ENCODE measurements at regions of chr1 and their contacts with region 1.

Region 1: DNA sequence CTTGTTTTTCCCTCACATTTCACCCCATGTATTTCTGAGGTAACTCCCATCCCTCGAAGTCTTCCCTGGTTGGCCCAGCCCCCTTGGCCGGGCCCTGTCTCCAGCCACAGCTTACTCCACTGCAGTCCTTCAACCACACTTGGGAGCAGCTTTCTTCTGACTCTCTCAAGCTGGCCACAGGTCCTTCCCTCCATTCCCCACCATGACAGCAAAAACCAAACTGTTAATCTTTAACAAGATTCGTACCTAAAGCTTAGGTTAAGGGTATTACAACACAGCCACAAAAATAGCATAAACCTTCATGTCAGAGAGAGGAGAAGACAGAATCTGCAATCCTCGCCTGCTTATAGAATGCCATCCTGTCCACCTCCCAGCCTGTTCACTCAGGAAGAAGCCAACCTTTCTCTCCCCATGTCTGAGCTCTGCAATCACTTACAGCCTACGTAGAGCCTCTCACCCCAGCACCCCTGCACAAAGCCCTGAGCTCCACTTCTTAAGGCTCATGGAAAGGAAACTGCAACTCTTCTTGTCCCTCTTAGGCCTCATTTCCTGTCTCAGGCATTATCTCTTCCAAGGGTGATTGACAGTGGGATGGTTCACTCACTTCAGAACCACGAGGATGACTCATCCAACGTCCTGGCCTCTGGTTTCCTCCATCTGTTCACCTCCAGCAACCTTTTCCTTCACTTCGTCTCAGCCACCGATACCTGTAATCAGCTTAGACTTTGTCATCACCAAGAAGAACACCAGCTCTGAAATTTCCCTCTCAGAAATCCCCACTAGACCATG is 72.8 kb downstream of the CD2 start:
- DNase-seq: peak; percentile 87
- ATAC-seq: peak; percentile 90
- H3K4me3 Mint-ChIP-seq: peak overlapping the region; percentile 77
- H3K27ac Mint-ChIP-seq: peak overlapping the region; percentile 97
- H3K4me1 Mint-ChIP-seq: peaks cover 69% of the 10 kb centered on the region
- H3K27me3 Mint-ChIP-seq: no peaks in the 10 kb centered on the region

Region 2: DNA sequence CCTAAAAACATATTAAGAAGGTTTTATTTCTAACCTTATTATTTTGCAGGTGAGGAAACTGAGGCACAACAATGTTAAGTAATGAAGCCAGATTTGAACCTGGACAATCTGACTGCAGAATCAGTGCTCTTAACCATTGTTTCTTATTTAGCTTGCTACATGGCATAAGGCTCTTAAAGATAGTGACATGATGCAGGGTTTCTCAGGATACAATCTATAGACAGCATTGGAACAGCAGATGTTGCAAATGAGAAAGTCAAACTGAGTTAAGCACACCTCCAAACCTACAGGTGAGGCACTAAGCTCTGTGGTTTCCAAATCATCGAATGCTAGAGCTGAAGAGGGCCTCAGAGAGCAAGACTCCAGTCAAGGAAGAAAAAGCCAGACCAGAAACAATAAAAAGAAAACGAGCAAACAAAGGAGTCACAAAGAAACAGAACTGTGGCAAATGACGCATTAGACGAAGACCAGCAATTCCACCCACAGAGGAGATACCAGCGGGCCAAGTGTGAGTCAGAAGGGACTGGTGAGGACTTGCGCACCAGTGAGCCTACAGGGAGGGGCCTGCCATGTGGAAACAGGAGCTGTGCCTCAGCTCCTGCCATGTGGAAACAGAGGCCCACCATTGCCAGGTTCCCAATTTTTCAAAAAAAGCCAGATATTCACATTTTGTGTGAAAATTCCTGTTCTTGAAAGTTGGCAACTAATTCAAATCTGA is 270.6 kb before region 1 on chr1:
- CTCF ChIA-PET with region 1: no interaction called
- POLR2A ChIA-PET with region 1: no interaction called
- intact Hi-C with region 1: loop called in 1 of 2 experiments (anchors 1 kb)
- DNase-seq: peak; percentile 88
- ATAC-seq: peak; percentile 92
- H3K4me3 Mint-ChIP-seq: no peak overlapping the region
- H3K27ac Mint-ChIP-seq: peak overlapping the region; percentile 87
- H3K4me1 Mint-ChIP-seq: peaks cover 73% of the 10 kb centered on the region
- H3K27me3 Mint-ChIP-seq: no peaks in the 10 kb centered on the region

Region 3: DNA sequence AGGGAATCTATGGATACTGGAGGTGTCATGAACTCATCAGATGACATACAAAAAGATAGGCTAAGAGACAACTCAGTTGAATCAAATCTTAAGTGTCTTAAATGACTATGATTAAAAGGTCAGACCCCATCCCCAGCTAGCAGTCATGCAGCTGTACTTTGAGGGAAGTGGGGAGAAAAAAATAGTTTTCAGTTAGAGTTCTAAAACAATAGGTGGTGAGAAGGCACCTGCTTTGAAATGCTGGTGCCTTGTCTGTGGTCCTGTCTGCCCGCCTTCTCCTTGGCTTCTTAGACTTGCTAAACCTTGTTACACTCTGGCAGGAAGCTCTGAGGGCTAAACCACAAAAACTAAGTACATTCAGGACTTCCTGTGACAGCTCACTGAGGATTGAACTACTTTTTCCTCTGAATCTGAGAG is 57.4 kb before region 1 on chr1:
- CTCF ChIA-PET with region 1: interaction called, 30 read pairs
- POLR2A ChIA-PET with region 1: interaction called, 77 read pairs
- intact Hi-C with region 1: loop called (anchors 1 kb)
- DNase-seq: peak; percentile 86
- ATAC-seq: peak; percentile 53
- H3K4me3 Mint-ChIP-seq: peak overlapping the region; percentile 93
- H3K27ac Mint-ChIP-seq: peak overlapping the region; percentile 100
- H3K4me1 Mint-ChIP-seq: peaks cover 96% of the 10 kb centered on the region
- H3K27me3 Mint-ChIP-seq: no peaks in the 10 kb centered on the region

Region 4: DNA sequence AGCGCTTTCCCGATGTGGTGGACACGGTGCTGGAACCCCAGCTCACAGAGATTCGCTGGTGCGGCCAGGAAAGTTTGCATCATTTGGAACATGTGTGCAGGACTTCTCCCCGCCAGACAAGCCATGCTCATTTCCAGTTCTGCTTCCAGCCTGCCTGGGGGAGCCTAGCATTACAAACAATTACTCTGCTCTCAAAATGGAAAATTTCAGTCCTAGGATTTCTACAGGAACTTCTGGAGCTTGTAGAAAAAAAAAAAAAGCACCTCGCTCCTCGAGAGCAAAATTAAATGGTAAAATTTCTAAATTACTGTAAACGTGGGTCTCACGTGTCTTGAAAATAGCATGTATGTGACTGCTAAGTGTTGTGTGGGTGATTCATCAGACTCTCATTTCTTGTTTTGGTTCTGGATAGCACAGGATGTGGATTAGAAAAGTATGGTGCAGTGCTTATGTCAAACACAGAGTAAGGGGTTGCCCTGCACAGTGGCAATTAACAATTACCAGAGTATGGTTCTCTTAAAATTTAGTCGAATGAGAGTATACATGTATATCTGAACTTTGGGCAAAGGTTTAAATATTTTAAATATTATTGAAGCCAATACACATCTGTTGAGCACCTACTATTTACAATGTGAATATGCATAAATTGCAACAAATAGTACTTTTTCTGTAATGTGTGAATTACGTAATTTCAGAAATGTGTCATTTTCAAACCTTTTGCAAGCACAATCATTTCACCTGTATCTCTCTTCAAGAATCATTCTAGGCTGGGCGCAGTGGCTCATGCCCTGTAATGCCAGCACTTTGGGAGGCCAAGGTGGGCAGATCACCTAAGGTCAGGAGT is 20.9 kb after region 1 on chr1:
- CTCF ChIA-PET with region 1: interaction called, 6 read pairs
- POLR2A ChIA-PET with region 1: interaction called, 3 read pairs
- intact Hi-C with region 1: loop called (anchors 1 kb)
- DNase-seq: peak; percentile 57
- ATAC-seq: peak; percentile 99
- H3K4me3 Mint-ChIP-seq: no peak overlapping the region
- H3K27ac Mint-ChIP-seq: peak overlapping the region; percentile 19
- H3K4me1 Mint-ChIP-seq: peaks cover 32% of the 10 kb centered on the region
- H3K27me3 Mint-ChIP-seq: peaks cover 2% of the 10 kb centered on the region

Region 5: DNA sequence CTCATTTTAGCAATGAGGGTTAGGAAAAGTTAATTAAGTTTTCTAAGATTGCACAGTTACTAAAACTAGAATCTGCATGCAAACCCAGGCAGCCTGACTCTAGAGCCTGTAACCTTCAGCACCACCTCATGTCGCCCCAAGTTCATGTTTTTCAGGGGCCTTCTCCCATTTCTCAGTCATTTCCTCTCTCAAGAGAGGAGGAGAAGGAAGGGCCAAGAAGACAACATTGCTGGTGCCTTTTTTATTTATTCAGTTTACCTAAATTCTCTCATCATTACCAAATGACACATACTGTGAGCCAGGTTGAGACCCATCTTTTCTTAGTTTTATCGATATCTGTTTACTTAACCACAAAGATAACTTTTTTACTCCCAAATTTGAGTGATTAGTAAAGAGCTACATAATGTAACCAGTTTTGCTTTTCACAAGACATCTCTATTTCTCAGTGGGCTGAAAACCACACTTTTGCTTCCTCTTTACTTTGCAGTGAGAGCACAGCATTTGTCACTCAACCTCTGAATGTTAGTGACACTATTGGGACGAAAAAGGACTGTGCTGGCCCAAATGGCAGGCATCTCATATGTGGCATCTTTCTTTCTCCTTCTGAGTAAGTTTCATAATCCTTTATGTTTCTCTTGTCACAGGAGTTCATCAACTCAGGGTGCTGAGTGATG is 174.4 kb after region 1 on chr1 and contains the start of gene CD101:
- CTCF ChIA-PET with region 1: interaction called, 3 read pairs
- POLR2A ChIA-PET with region 1: interaction called, 6 read pairs
- intact Hi-C with region 1: loop called in 1 of 2 experiments (anchors 1 kb)
- DNase-seq: peak; percentile 70
- ATAC-seq: peak; percentile 95
- H3K4me3 Mint-ChIP-seq: peak within 1 kb of the TSS; percentile 3
- H3K27ac Mint-ChIP-seq: peak within 1 kb of the TSS; percentile 66
- H3K4me1 Mint-ChIP-seq: peaks cover 53% of the 10 kb centered on the region
- H3K27me3 Mint-ChIP-seq: peaks cover 3% of the 10 kb centered on the region
- total RNA-seq, gene CD101: 0.30 to 0.60 TPM